ENCODE measurements at regions of chr20 and their contacts with region 1.

Region 1: GRCh38 chr20:21323640-21324039 is 20.5 kb downstream of the XRN2 start:
- DNase-seq: peak; percentile 87
- H3K4me3 Mint-ChIP-seq: peak overlapping the region; percentile 53
- H3K27ac Mint-ChIP-seq: peak overlapping the region; percentile 77
- H3K4me1 Mint-ChIP-seq: peaks cover 38% of the 10 kb centered on the region
- H3K27me3 Mint-ChIP-seq: no peaks in the 10 kb centered on the region
- CTCF ChIP-seq: no peak

Region 2: DNA sequence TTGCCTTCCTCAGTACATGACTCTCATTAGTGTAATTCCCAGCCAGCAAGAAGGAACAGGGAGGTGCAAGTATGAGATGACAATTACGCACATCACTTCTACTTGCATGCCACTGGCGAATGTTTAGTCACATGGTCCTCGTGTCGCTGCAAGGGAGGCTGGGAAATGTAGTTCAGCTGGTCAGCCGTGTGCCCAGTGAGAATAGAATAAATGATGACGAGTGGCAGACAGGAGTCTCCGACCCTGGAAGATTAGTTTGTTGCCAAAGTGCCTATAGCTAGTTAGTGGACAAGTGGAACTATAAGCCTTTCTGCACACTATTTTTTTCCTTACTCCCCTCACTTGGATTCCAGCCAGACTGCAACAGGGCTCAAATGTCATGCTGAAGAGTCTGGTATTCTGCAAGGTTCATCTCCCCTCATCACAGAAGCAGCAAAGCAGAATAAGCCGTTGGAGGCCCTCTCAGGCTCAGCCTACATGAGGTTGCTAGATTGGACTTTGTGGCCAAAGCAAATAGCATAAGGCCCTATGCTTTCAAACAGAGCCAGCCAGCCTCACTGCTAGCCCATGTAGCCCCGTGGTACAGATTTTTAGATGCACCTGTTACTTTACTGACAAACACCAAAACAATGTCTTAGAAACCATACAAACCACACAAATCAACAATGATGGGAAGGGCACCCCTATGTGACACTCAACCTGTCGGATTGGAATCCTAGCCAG is 227.2 kb before region 1 on chr20:
- CTCF ChIA-PET with region 1: no interaction called
- POLR2A ChIA-PET with region 1: no interaction called
- intact Hi-C with region 1: no loop called
- DNase-seq: peak; percentile 80
- H3K4me3 Mint-ChIP-seq: no peak overlapping the region
- H3K27ac Mint-ChIP-seq: no peak overlapping the region
- H3K4me1 Mint-ChIP-seq: no peaks in the 10 kb centered on the region
- H3K27me3 Mint-ChIP-seq: no peaks in the 10 kb centered on the region
- CTCF ChIP-seq: no peak

Region 3: DNA sequence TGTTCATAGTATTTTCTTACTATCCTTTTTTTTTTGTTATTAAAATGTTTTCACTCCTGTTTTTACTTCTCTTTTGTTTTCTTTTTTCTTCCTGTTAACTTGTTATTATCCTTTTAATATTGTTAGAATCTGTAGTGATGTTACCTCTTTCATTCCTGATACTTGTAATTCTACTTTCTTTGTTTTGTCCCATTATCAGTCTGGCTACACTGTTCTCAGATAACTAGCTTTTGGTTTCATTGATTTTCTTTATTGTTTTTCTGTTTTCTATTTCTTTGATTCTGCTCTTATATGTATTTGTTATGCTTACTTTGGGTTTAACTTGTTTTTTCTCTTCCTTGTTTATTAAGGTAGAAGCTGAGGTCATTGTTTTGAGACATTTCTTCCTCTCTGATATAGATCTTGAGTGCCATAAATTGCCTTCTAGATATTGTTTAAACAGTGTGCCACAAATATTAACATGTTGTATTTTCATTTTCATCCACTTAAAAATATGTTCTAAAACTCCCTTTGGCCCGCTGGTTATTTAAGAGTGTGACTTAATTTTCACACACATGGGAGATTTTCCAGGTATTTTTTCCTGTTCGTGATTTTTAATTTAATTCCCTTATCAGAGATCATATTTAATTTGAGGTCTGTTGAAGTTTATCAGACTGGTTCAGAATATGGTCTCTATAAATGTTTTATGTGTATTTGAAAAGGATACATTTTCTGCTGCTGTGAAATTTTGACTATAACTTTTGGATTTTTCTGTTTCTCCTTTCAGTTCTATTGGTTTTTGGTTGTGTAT is 13.8 kb before region 1 on chr20:
- CTCF ChIA-PET with region 1: interaction called, 9 read pairs
- POLR2A ChIA-PET with region 1: interaction called, 104 read pairs
- intact Hi-C with region 1: no loop called
- DNase-seq: no peak
- H3K4me3 Mint-ChIP-seq: no peak overlapping the region
- H3K27ac Mint-ChIP-seq: peak overlapping the region; percentile 27
- H3K4me1 Mint-ChIP-seq: peaks cover 18% of the 10 kb centered on the region
- H3K27me3 Mint-ChIP-seq: no peaks in the 10 kb centered on the region
- CTCF ChIP-seq: no peak

Region 4: DNA sequence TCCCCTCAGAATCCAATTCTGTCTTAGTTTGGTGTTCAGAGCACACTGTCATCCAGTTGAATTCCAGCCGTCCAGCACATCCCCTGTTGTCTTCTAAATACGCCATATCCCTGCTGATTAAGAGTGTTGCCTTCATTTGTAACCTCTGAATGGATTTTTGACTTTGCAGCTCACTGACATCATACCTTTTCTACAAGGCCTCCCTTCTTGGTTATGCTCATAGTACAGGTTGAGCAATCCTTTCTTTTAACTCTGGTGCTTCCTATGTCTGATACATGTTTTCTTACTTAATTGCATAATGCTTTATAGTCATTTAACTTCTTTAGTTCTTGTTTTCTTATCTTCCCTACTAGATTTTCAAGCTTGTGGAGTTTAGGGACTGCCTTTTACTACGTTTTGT is 15.9 kb after region 1 on chr20:
- CTCF ChIA-PET with region 1: interaction called, 8 read pairs
- POLR2A ChIA-PET with region 1: interaction called, 17 read pairs
- intact Hi-C with region 1: no loop called
- DNase-seq: peak; percentile 8
- H3K4me3 Mint-ChIP-seq: no peak overlapping the region
- H3K27ac Mint-ChIP-seq: no peak overlapping the region
- H3K4me1 Mint-ChIP-seq: peaks cover 5% of the 10 kb centered on the region
- H3K27me3 Mint-ChIP-seq: no peaks in the 10 kb centered on the region
- CTCF ChIP-seq: no peak

Measured in MCF 10A (cell line).